Naive thymus-derived CD4-positive, alpha-beta T cell (primary cell): ENCODE measurements at regions of chr2 and their contacts with region 1.

Region 1: DNA sequence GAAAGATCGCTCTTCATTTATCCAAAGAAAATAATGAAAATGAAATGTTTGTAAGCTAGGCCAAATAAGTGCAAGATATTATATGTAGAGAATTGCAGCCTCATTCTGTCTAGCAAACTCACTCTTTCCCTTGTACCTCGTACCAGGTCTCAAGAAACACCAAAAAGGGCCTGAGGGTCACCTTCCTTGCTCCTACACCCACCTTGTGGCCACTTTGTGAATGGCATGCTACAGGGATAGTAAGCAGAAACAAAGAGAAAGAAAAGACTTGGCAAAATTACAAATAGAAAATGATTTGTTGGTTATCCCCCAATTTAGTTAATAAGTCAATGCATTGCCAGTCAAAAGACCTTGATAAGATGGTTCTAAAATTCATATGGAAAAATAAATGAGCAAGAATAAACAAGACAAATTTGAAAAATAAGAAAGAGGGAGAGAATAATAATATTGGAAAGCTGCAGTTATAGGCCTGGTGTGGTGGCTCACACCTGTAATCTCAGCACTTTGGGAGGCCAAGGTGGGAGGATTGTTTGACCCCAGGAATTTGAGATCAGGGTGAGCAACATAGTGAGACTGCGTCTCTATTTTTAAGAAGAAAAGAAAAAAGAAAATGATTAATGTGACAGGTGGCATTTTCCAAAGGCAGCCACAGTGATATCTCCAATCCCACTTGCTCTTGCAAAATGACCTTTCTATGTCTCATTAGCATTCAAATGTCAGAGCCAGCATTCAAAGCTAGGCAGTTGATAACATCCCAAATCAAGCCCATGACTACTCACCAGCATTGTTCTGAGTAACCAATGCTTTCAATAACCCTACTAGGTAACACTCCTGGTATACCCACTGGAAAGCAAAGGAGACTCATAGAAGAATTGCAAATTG is 38.8 kb upstream of the BMP10 start:
- DNase-seq: peak; percentile 29 to 65 (median 59)
- ATAC-seq: peak; percentile 52
- H3K4me3 ChIP-seq: no peak overlapping the region
- H3K4me3 Mint-ChIP-seq: no peak overlapping the region
- H3K27ac ChIP-seq: no peak overlapping the region
- H3K27ac Mint-ChIP-seq: peak overlapping the region in 2 of 9 donors; percentile 33 to 80
- H3K4me1 ChIP-seq: peaks cover 28 to 62% of the 10 kb centered on the region in 2 donors
- H3K4me1 Mint-ChIP-seq: peaks cover 22 to 35% (median 26%) of the 10 kb centered on the region in 7 donors
- H3K27me3 ChIP-seq: no peaks in the 10 kb centered on the region
- H3K27me3 Mint-ChIP-seq: no peaks in the 10 kb centered on the region

Region 2: GRCh38 chr2:68487773-68488355 is 422.2 kb before region 1 on chr2:
- CTCF ChIA-PET with region 1: interaction called, 9 read pairs
- POLR2A ChIA-PET with region 1: no interaction called
- intact Hi-C with region 1: loop called in 1 of 2 experiments (anchors 1 kb)
- DNase-seq: peak in 4 of 9 donors; percentile 22 to 38 (median 28)
- ATAC-seq: peak; percentile 72
- H3K4me3 ChIP-seq: no peak overlapping the region
- H3K4me3 Mint-ChIP-seq: no peak overlapping the region
- H3K27ac ChIP-seq: no peak overlapping the region
- H3K27ac Mint-ChIP-seq: no peak overlapping the region
- H3K4me1 ChIP-seq: no peaks in the 10 kb centered on the region
- H3K4me1 Mint-ChIP-seq: peaks cover 0 to 5% (median 2%) of the 10 kb centered on the region in 7 donors
- H3K27me3 ChIP-seq: no peaks in the 10 kb centered on the region
- H3K27me3 Mint-ChIP-seq: no peaks in the 10 kb centered on the region

Region 3: DNA sequence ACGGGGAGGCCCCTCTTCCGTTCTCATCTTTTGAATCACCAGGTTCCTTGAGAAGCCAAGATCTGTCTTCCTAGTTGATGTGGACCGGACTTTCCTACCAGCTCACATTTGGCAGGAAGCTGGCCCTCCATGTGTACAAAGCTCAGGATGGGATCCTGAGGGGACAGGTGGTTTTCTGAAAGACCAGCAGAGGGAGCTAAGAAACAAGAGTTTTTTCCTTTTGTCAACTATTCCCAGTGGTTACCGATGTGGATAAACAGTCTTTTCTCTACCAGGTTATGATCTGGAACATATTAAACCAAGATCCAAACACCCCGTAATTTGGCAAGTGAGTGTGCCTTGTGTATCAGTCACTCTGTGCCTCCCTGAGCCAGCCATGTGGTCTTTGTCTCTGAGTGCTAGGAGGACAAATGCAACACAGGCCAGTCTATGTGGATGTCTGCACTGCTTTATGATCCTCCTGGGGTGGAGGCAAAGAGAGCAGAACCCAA is 200.6 kb before region 1 on chr2:
- CTCF ChIA-PET with region 1: interaction called, 53 read pairs
- POLR2A ChIA-PET with region 1: no interaction called
- intact Hi-C with region 1: loop called (anchors 1 kb)
- DNase-seq: peak in 7 of 9 donors; percentile 14 to 41 (median 37)
- ATAC-seq: peak; percentile 66
- H3K4me3 ChIP-seq: no peak overlapping the region
- H3K4me3 Mint-ChIP-seq: peak overlapping the region in 5 of 10 donors; percentile 10 to 75 (median 55)
- H3K27ac ChIP-seq: no peak overlapping the region
- H3K27ac Mint-ChIP-seq: peak overlapping the region in 6 of 9 donors; percentile 22 to 74 (median 42)
- H3K4me1 ChIP-seq: peaks cover under 1 to 3% of the 10 kb centered on the region in 2 donors
- H3K4me1 Mint-ChIP-seq: peaks cover 5 to 32% (median 26%) of the 10 kb centered on the region in 7 donors
- H3K27me3 ChIP-seq: no peaks in the 10 kb centered on the region
- H3K27me3 Mint-ChIP-seq: peaks cover 0 to 16% (median 0%) of the 10 kb centered on the region in 5 donors

Region 4: GRCh38 chr2:68734688-68735525 is 175.1 kb before region 1 on chr2 and contains the start of gene ARHGAP25:
- CTCF ChIA-PET with region 1: interaction called, 5 read pairs
- POLR2A ChIA-PET with region 1: interaction called, 13 read pairs
- intact Hi-C with region 1: loop called (anchors 1 to 5 kb)
- DNase-seq: peak; percentile 20 to 81 (median 69)
- ATAC-seq: peak; percentile 78
- H3K4me3 ChIP-seq: peak within 1 kb of the TSS; percentile 77
- H3K4me3 Mint-ChIP-seq: no peak within 1 kb of the TSS
- H3K27ac ChIP-seq: peak within 1 kb of the TSS; percentile 78
- H3K27ac Mint-ChIP-seq: no peak within 1 kb of the TSS
- H3K4me1 ChIP-seq: peaks cover 38 to 48% of the 10 kb centered on the region in 2 donors
- H3K4me1 Mint-ChIP-seq: peaks cover 23 to 37% (median 32%) of the 10 kb centered on the region in 7 donors
- H3K27me3 ChIP-seq: no peaks in the 10 kb centered on the region
- H3K27me3 Mint-ChIP-seq: no peaks in the 10 kb centered on the region
- total RNA-seq, gene ARHGAP25: 68.2 to 139 (median 116) TPM

Region 5: GRCh38 chr2:68751397-68752339 is 158.4 kb before region 1 on chr2:
- CTCF ChIA-PET with region 1: interaction called, 64 read pairs
- POLR2A ChIA-PET with region 1: interaction called, 9 read pairs
- intact Hi-C with region 1: loop called (anchors 1 kb)
- DNase-seq: peak; percentile 77 to 88 (median 85)
- ATAC-seq: peak; percentile 97
- H3K4me3 ChIP-seq: peak overlapping the region; percentile 24
- H3K4me3 Mint-ChIP-seq: peak overlapping the region; percentile 9 to 94 (median 66)
- H3K27ac ChIP-seq: peak overlapping the region; percentile 65
- H3K27ac Mint-ChIP-seq: peak overlapping the region in 8 of 9 donors; percentile 57 to 96 (median 82)
- H3K4me1 ChIP-seq: peaks cover 82 to 83% of the 10 kb centered on the region in 2 donors
- H3K4me1 Mint-ChIP-seq: peaks cover 61 to 94% (median 87%) of the 10 kb centered on the region in 7 donors
- H3K27me3 ChIP-seq: no peaks in the 10 kb centered on the region
- H3K27me3 Mint-ChIP-seq: no peaks in the 10 kb centered on the region

Region 6: GRCh38 chr2:68828887-68829708 is 80.9 kb before region 1 on chr2:
- CTCF ChIA-PET with region 1: interaction called, 5 read pairs
- POLR2A ChIA-PET with region 1: interaction called, 3 read pairs
- intact Hi-C with region 1: loop called in 1 of 2 experiments (anchors 1 kb)
- DNase-seq: peak; percentile 43 to 87 (median 79)
- ATAC-seq: peak; percentile 76
- H3K4me3 ChIP-seq: peak overlapping the region; percentile 15
- H3K4me3 Mint-ChIP-seq: peak overlapping the region; percentile 67 to 89 (median 78)
- H3K27ac ChIP-seq: peak overlapping the region; percentile 61
- H3K27ac Mint-ChIP-seq: peak overlapping the region; percentile 84 to 98 (median 94)
- H3K4me1 ChIP-seq: peaks cover 32 to 51% of the 10 kb centered on the region in 2 donors
- H3K4me1 Mint-ChIP-seq: peaks cover 59 to 85% (median 71%) of the 10 kb centered on the region in 7 donors
- H3K27me3 ChIP-seq: no peaks in the 10 kb centered on the region
- H3K27me3 Mint-ChIP-seq: no peaks in the 10 kb centered on the region

Region 7: GRCh38 chr2:68925295-68925896 is 15.4 kb after region 1 on chr2:
- CTCF ChIA-PET with region 1: interaction called, 16 read pairs
- POLR2A ChIA-PET with region 1: interaction called, 3 read pairs
- intact Hi-C with region 1: loop called in 1 of 2 experiments (anchors 1 kb)
- DNase-seq: peak in 7 of 9 donors; percentile 40 to 70 (median 63)
- ATAC-seq: peak; percentile 84
- H3K4me3 ChIP-seq: no peak overlapping the region
- H3K4me3 Mint-ChIP-seq: no peak overlapping the region
- H3K27ac ChIP-seq: no peak overlapping the region
- H3K27ac Mint-ChIP-seq: peak overlapping the region in 2 of 9 donors; percentile 48 to 53
- H3K4me1 ChIP-seq: no peaks in the 10 kb centered on the region
- H3K4me1 Mint-ChIP-seq: peaks cover 0 to 8% (median 0%) of the 10 kb centered on the region in 7 donors
- H3K27me3 ChIP-seq: no peaks in the 10 kb centered on the region
- H3K27me3 Mint-ChIP-seq: peaks cover 0 to 31% (median 4%) of the 10 kb centered on the region in 5 donors

Region 8: GRCh38 chr2:69933839-69934613 is 1024.0 kb after region 1 on chr2:
- CTCF ChIA-PET with region 1: no interaction called
- POLR2A ChIA-PET with region 1: no interaction called
- intact Hi-C with region 1: no loop called
- DNase-seq: no peak
- ATAC-seq: peak; percentile 75
- H3K4me3 ChIP-seq: no peak overlapping the region
- H3K4me3 Mint-ChIP-seq: no peak overlapping the region
- H3K27ac ChIP-seq: no peak overlapping the region
- H3K27ac Mint-ChIP-seq: peak overlapping the region in 6 of 9 donors; percentile 3 to 71 (median 59)
- H3K4me1 ChIP-seq: peaks cover 0 to 9% of the 10 kb centered on the region in 2 donors
- H3K4me1 Mint-ChIP-seq: peaks cover 22 to 43% (median 41%) of the 10 kb centered on the region in 7 donors
- H3K27me3 ChIP-seq: no peaks in the 10 kb centered on the region
- H3K27me3 Mint-ChIP-seq: no peaks in the 10 kb centered on the region